ENCODE measurements at regions of chr15 and their contacts with region 1.

Region 1: GRCh38 chr15:35320158-35320780 is 225.7 kb downstream of the DPH6 start:
- DNase-seq: no peak
- H3K4me3 ChIP-seq: no peak overlapping the region
- H3K27ac ChIP-seq: no peak overlapping the region
- H3K4me1 ChIP-seq: no peaks in the 10 kb centered on the region
- H3K27me3 ChIP-seq: no peaks in the 10 kb centered on the region
- CTCF ChIP-seq: no peak

Region 2: DNA sequence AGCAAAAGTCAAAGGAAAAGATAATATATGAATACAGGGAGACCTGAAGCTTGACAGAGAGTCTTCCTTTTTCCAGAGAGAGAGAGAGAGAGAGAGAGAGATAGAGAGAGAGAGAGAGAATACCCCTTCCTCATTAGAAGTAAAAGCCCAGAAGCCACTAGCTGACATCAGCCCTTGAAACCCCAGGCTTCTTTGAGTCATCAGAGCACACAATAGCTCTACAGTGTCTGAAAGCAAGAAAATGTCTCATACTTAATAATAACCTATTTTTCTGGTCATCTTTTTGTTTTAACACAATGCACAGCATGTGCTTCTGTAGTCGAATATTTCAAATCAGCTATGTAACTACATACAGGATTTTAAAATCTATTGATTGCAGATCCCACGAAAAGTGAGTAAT is 126.0 kb before region 1 on chr15:
- CTCF ChIA-PET with region 1: no interaction called
- POLR2A ChIA-PET with region 1: no interaction called
- intact Hi-C with region 1: no loop called
- DNase-seq: no peak
- H3K4me3 ChIP-seq: no peak overlapping the region
- H3K27ac ChIP-seq: no peak overlapping the region
- H3K4me1 ChIP-seq: no peaks in the 10 kb centered on the region
- H3K27me3 ChIP-seq: no peaks in the 10 kb centered on the region
- CTCF ChIP-seq: no peak

Region 3: GRCh38 chr15:35374661-35375060 is 54.4 kb after region 1 on chr15:
- CTCF ChIA-PET with region 1: no interaction called
- POLR2A ChIA-PET with region 1: no interaction called
- intact Hi-C with region 1: loop called (anchors 5 kb)
- DNase-seq: no peak
- H3K4me3 ChIP-seq: no peak overlapping the region
- H3K27ac ChIP-seq: no peak overlapping the region
- H3K4me1 ChIP-seq: no peaks in the 10 kb centered on the region
- H3K27me3 ChIP-seq: no peaks in the 10 kb centered on the region
- CTCF ChIP-seq: no peak

Measured in A673 (cell line).